PC-9 (cell line): ENCODE measurements at regions of chr7 and their contacts with region 1.

Region 1: DNA sequence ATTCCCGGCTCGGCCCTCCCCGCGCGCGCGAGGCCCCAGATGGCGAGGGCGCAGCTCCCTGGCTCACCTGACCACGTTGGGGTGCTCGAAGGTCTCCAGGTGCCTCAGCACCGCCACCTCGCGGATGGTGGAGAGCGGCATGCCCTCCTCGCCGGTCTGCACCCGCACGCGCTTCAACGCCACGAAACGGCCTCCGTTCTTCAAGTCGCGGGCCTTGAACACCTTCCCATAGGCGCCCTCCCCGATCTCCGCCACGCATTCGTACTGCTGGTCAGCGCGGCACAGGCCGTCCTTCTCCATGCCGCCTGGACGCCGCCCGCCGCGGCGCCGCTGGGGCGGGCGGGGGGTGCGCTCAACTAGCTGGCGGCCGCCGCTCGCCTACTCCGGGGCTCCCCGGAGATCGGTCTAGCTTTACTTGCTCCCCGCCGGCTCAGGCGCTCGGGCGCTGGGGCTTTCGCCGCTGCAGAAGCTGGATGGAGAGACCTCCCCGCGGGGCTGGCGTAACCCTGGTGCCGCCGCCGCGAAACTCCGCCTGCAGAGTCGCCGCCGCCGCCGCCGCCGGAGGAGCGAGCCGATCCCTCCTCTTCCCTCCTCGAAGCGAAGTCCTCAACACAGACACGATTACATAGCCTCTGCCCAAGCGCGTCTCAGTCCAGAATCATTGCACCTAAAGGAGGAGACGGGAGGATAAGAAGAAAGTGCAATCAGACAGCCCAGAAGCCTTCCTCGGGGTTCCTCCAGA is 3.2 kb downstream of the CDK6 start:
- DNase-seq: peak; percentile 70 to 91
- H3K4me3 ChIP-seq: peak overlapping the region; percentile 94
- H3K27ac ChIP-seq: peak overlapping the region; percentile 77
- H3K4me1 ChIP-seq: peaks cover 44% of the 10 kb centered on the region
- H3K27me3 ChIP-seq: no peaks in the 10 kb centered on the region
- CTCF ChIP-seq: peak; percentile 77

Region 2: GRCh38 chr7:92421676-92422435 is 411.3 kb before region 1 on chr7:
- CTCF ChIA-PET with region 1: no interaction called
- POLR2A ChIA-PET with region 1: no interaction called
- intact Hi-C with region 1: loop called (anchors 10 kb)
- DNase-seq: no peak
- H3K4me3 ChIP-seq: no peak overlapping the region
- H3K27ac ChIP-seq: no peak overlapping the region
- H3K4me1 ChIP-seq: 0 out of 2 replicates have a peak, but pooled peaks cover 5% of the 10 kb centered on the region
- H3K27me3 ChIP-seq: no peaks in the 10 kb centered on the region
- CTCF ChIP-seq: no peak

Region 3: GRCh38 chr7:92567460-92567859 is 265.7 kb before region 1 on chr7:
- CTCF ChIA-PET with region 1: no interaction called
- POLR2A ChIA-PET with region 1: no interaction called
- intact Hi-C with region 1: no loop called
- DNase-seq: no peak
- H3K4me3 ChIP-seq: no peak overlapping the region
- H3K27ac ChIP-seq: no peak overlapping the region
- H3K4me1 ChIP-seq: no peaks in the 10 kb centered on the region
- H3K27me3 ChIP-seq: no peaks in the 10 kb centered on the region
- CTCF ChIP-seq: no peak

Region 4: DNA sequence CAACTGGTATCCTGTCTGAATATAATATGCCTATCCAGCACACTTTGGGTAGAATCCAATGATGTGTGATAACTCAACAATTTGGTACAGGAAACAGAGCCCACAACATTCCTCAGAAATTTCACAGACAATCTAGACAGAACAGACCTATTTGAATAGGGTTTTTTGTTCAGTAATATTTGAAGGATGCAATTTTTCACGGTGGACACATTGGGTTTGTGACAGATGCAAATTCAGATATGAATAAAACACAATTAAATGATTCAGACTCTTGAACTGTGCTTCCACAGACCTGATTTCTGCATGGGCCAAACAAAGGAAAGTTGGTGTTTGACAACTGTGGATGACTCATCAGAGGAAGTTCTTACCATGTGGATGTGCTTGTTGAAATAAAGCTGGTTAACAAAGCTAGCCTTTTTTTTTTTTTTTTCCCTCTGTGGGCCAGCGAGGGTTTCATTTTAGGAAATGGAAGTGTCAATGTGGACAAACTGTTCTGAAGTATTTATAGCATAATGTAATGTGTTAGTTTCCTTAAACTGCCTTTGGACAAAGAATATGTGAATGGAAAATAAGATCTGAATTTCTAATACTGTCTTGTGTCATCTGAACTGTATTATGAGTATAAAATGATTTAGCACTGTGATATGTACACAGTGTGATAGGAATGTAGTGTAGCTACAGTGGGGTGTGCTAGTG is 199.8 kb before region 1 on chr7:
- CTCF ChIA-PET with region 1: no interaction called
- POLR2A ChIA-PET with region 1: interaction called, 13 read pairs
- intact Hi-C with region 1: loop called (anchors 1 kb)
- DNase-seq: peak; percentile 43 to 90
- H3K4me3 ChIP-seq: no peak overlapping the region; the same call in 1 of the 2 replicates
- H3K27ac ChIP-seq: peak overlapping the region; percentile 60
- H3K4me1 ChIP-seq: peaks cover 41% of the 10 kb centered on the region
- H3K27me3 ChIP-seq: no peaks in the 10 kb centered on the region
- CTCF ChIP-seq: no peak

Region 5: DNA sequence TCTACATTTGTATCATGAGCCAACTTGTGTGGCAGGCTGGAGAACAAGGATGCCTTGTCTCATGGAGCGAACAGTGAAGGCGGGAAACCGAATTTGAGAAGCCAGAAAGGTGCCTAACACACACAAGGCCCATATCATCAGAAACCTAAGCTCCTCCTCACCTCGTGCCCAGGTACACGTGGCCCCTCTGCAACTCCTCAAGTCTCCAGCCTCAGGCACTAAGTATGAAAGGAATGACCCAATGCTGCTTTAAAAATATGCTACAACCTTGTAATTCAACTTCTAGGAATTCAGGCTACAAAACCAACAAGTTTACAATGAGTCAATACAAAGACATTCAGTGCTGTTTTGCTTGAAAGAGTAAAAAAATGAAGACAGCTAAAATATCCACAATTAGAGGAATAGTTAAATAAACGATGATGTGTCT is 92.5 kb before region 1 on chr7:
- CTCF ChIA-PET with region 1: no interaction called
- POLR2A ChIA-PET with region 1: interaction called, 6 read pairs
- intact Hi-C with region 1: loop called (anchors 1 kb)
- DNase-seq: peak; percentile 75 to 94
- H3K4me3 ChIP-seq: no peak overlapping the region
- H3K27ac ChIP-seq: peak overlapping the region; percentile 41
- H3K4me1 ChIP-seq: peaks cover 27% of the 10 kb centered on the region
- H3K27me3 ChIP-seq: no peaks in the 10 kb centered on the region
- CTCF ChIP-seq: no peak

Region 6: GRCh38 chr7:92916674-92917224 is 83.6 kb after region 1 on chr7:
- CTCF ChIA-PET with region 1: interaction called, 6 read pairs
- POLR2A ChIA-PET with region 1: no interaction called
- intact Hi-C with region 1: loop called (anchors 1 kb)
- DNase-seq: peak; percentile 86 to 95
- H3K4me3 ChIP-seq: no peak overlapping the region
- H3K27ac ChIP-seq: peak overlapping the region; percentile 83
- H3K4me1 ChIP-seq: peaks cover 18% of the 10 kb centered on the region
- H3K27me3 ChIP-seq: no peaks in the 10 kb centered on the region
- CTCF ChIP-seq: no peak

Region 7: GRCh38 chr7:93043385-93043985 is 210.3 kb after region 1 on chr7:
- CTCF ChIA-PET with region 1: no interaction called
- POLR2A ChIA-PET with region 1: interaction called, 3 read pairs
- intact Hi-C with region 1: loop called (anchors 2 kb)
- DNase-seq: peak in 1 of 2 experiments; percentile 75
- H3K4me3 ChIP-seq: no peak overlapping the region
- H3K27ac ChIP-seq: no peak overlapping the region
- H3K4me1 ChIP-seq: no peaks in the 10 kb centered on the region
- H3K27me3 ChIP-seq: no peaks in the 10 kb centered on the region
- CTCF ChIP-seq: no peak

Region 8: DNA sequence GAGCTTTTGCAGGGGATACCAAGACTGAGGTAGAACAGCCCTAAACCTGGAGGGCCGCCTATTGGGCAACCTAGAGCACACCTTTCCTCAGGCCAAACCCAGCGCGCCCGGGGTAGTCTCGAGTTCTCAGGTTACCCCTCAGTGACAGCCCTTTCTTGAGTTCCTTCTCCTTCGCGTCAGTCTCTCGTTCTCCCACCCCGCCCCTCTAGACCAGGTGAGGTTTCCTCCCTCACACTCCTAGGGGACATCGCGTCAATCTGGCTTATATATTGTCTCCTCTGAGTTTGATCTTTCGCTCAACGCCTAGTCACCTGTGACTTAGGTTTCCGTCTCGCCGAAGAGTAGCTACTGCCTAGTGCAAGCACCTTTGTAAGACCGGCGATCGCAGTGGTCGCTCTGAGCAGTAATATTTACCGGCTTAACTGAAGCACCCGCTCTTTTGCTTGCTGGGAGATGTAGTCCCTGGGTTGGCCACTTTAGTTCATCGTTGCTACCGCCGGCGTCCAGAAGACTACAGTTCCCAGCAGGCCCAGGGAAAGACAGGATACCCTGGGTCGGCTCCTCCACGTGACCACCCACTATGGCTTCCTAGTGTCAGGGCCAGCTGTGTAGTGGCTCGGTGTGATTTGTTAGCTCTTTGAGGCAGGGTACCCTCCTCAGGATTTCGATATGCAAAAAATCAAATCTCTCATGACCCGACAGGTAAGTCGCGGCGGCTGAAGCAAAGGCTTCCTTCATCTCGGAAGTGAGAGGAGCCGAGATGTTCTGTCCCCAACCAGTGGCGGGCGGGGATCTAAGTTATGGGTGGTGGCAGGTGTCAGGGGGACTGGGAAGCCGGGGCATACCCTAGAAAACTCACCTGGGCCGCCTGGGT is 398.8 kb after region 1 on chr7 and contains the start of gene VPS50:
- CTCF ChIA-PET with region 1: no interaction called
- POLR2A ChIA-PET with region 1: no interaction called
- intact Hi-C with region 1: loop called (anchors 5 kb)
- DNase-seq: peak; percentile 95 to 96
- H3K4me3 ChIP-seq: peak within 1 kb of the TSS; percentile 70
- H3K27ac ChIP-seq: peak within 1 kb of the TSS; percentile 86
- H3K4me1 ChIP-seq: peaks cover 14% of the 10 kb centered on the region; the same call in 1 of the 2 replicates
- H3K27me3 ChIP-seq: no peaks in the 10 kb centered on the region
- CTCF ChIP-seq: peak; percentile 21; the same call in 1 of the 2 replicates
- total RNA-seq, gene VPS50: 20.3 and 32.2 TPM in 2 replicates

Region 9: GRCh38 chr7:93350338-93350737 is 517.1 kb after region 1 on chr7:
- CTCF ChIA-PET with region 1: no interaction called
- POLR2A ChIA-PET with region 1: no interaction called
- intact Hi-C with region 1: no loop called
- DNase-seq: no peak
- H3K4me3 ChIP-seq: no peak overlapping the region
- H3K27ac ChIP-seq: no peak overlapping the region
- H3K4me1 ChIP-seq: no peaks in the 10 kb centered on the region
- H3K27me3 ChIP-seq: no peaks in the 10 kb centered on the region
- CTCF ChIP-seq: no peak